ENCODE measurements at regions of chr15 and their contacts with region 1.

Region 1: GRCh38 chr15:50577492-50577891 is 31.0 kb upstream of the USP50 start:
- DNase-seq: no peak
- ATAC-seq: no peak
- H3K4me3 ChIP-seq: no peak overlapping the region
- H3K27ac ChIP-seq: no peak overlapping the region
- H3K4me1 ChIP-seq: no peaks in the 10 kb centered on the region
- H3K27me3 ChIP-seq: no peaks in the 10 kb centered on the region
- CTCF ChIP-seq: no peak

Region 2: DNA sequence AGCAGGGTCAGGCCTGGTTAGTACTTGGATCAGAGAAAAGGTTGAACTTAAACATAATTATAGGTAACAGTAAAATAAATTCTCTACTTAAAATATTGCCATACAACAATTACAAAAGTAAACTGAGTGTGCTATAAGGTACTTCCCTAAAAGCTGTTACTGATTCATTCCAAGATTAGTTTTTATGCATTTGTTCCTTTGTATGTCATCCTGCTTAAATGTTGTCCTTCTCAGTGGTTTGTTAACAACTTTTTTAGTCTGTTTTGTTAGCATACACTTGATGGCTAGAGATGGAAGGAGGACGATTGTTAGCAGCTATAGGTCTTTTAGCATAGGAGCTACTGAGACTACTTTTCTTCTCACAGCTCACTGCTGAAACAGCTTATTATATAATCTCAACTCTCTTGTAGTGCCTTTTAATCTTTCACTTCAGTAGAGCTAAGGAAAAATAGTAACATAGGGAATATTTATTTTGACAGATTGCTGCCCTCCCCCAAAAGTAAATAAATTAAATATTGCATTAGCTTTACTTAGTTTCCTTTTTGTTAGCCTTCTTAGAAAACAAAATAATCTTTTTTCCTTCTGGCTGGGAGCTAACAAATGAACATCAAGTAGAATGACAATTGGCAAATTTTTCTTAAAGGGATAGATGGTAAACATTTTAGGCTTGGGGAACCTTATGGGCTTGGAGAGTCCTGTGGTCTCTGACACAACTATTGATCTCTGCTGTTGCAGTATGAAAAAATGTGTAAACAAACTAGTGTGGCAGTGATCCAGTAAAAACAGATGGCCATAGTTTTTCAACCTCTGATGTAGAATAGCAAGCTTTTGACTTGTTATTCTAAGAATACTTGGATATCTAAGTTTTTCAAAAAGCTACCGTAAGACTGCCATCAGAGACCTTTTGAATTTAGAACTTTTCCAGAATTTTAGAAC is 113.8 kb before region 1 on chr15:
- CTCF ChIA-PET with region 1: interaction called, 10 read pairs
- POLR2A ChIA-PET with region 1: no interaction called
- in situ Hi-C with region 1: no loop called
- intact Hi-C with region 1: no loop called
- DNase-seq: no peak
- ATAC-seq: no peak
- H3K4me3 ChIP-seq: no peak overlapping the region
- H3K27ac ChIP-seq: no peak overlapping the region
- H3K4me1 ChIP-seq: peaks cover 10% of the 10 kb centered on the region
- H3K27me3 ChIP-seq: no peaks in the 10 kb centered on the region
- CTCF ChIP-seq: no peak